MCF 10A (cell line): ENCODE measurements at regions of chr1 and their contacts with region 1.

Region 1: GRCh38 chr1:228837817-228838716 is 102.8 kb downstream of the RHOU start:
- DNase-seq: peak; percentile 100
- H3K4me3 Mint-ChIP-seq: peak overlapping the region; percentile 4
- H3K27ac Mint-ChIP-seq: peak overlapping the region; percentile 78
- H3K4me1 Mint-ChIP-seq: peaks cover 50% of the 10 kb centered on the region
- H3K27me3 Mint-ChIP-seq: peaks cover 42% of the 10 kb centered on the region
- CTCF ChIP-seq: no peak

Region 2: GRCh38 chr1:228802386-228803220 is 35.5 kb before region 1 on chr1:
- CTCF ChIA-PET with region 1: interaction called, 5 read pairs
- POLR2A ChIA-PET with region 1: interaction called, 17 read pairs
- intact Hi-C with region 1: no loop called
- DNase-seq: peak; percentile 33
- H3K4me3 Mint-ChIP-seq: no peak overlapping the region
- H3K27ac Mint-ChIP-seq: no peak overlapping the region
- H3K4me1 Mint-ChIP-seq: peaks cover 23% of the 10 kb centered on the region
- H3K27me3 Mint-ChIP-seq: peaks cover 18% of the 10 kb centered on the region
- CTCF ChIP-seq: no peak

Region 3: GRCh38 chr1:228825840-228826484 is 12.1 kb before region 1 on chr1:
- CTCF ChIA-PET with region 1: interaction called, 4 read pairs
- POLR2A ChIA-PET with region 1: interaction called, 21 read pairs
- intact Hi-C with region 1: no loop called
- DNase-seq: no peak
- H3K4me3 Mint-ChIP-seq: no peak overlapping the region
- H3K27ac Mint-ChIP-seq: no peak overlapping the region
- H3K4me1 Mint-ChIP-seq: peaks cover 3% of the 10 kb centered on the region
- H3K27me3 Mint-ChIP-seq: peaks cover 18% of the 10 kb centered on the region
- CTCF ChIP-seq: no peak

Region 4: DNA sequence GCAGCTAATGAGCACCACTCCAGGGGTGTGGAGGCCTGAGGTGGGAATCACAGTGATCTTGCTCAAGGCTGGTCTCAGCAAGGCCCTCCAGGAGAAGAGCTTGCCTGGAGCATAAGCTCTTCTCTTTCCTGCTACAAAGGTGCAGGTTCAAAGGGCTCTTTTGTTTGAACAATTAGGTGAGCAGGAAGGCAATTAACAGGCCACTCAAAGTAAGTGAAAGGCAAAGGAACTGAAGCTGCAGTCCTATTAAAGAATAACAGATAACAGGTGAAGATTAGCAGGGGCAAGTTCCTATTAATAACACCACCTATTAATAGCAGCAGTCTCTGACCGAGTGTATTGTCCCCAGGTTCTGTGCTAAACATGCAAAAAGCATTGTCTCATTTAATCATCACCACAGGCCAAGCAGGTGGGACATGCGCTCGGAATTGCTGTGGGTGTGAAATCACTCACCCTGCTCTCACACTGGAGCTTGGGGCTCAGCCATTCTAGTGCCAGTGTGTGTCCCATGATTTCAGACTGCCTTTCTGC is 11.0 kb after region 1 on chr1:
- CTCF ChIA-PET with region 1: interaction called, 10 read pairs
- POLR2A ChIA-PET with region 1: interaction called, 27 read pairs
- intact Hi-C with region 1: no loop called
- DNase-seq: no peak
- H3K4me3 Mint-ChIP-seq: no peak overlapping the region
- H3K27ac Mint-ChIP-seq: no peak overlapping the region
- H3K4me1 Mint-ChIP-seq: no peaks in the 10 kb centered on the region
- H3K27me3 Mint-ChIP-seq: no peaks in the 10 kb centered on the region
- CTCF ChIP-seq: no peak

Region 5: DNA sequence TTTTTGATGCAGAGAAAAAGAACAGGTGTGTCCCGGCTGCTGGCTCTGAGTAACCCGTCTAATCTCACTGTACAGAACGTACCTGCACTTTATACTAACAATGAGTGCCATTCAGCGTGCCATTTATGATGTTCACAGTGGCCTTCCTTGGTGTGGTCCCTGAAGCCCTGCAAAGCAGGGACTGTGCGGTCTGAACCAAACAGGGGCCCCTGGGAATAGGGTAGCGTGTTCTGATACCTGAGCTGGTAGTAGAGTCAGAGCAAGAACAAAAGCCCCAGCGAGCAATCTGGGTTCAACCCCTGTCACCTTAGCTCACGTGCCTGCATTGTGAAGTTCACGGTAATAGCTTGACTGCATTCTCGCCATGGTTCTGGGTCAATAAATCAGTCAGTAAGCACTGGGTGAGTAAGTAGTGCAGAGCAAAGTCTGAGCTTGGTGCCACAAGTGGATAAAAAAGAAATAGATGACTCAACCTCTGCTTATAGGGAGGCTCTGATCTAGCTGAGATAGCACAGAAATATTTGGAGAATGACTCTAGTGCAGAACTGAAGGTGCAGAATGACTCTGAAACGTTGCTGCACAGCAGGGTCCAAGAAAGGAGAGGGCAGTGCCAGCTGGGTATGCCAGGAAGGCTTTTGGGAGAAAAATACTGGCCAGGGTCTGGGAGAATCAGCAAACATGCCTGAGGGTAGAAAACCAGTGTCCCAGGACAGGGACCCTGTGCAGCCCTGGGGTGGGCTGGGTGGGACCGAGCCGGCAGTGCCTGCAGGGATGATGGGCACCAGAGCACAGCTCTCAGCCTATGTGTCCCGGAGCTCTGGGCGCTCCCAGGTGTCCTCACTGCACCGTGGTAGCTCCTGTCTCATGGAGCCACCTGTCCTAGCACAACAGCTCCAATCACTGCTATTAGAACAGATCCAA is 23.1 kb after region 1 on chr1:
- CTCF ChIA-PET with region 1: interaction called, 6 read pairs
- POLR2A ChIA-PET with region 1: interaction called, 39 read pairs
- intact Hi-C with region 1: no loop called
- DNase-seq: peak; percentile 88
- H3K4me3 Mint-ChIP-seq: peak overlapping the region; percentile 1
- H3K27ac Mint-ChIP-seq: peak overlapping the region; percentile 2
- H3K4me1 Mint-ChIP-seq: peaks cover 32% of the 10 kb centered on the region
- H3K27me3 Mint-ChIP-seq: peaks cover 20% of the 10 kb centered on the region
- CTCF ChIP-seq: no peak

Region 6: GRCh38 chr1:228902781-228903433 is 64.8 kb after region 1 on chr1:
- CTCF ChIA-PET with region 1: interaction called, 5 read pairs
- POLR2A ChIA-PET with region 1: interaction called, 18 read pairs
- intact Hi-C with region 1: loop called (anchors 5 kb)
- DNase-seq: peak; percentile 100
- H3K4me3 Mint-ChIP-seq: peak overlapping the region; percentile 57
- H3K27ac Mint-ChIP-seq: peak overlapping the region; percentile 89
- H3K4me1 Mint-ChIP-seq: peaks cover 30% of the 10 kb centered on the region
- H3K27me3 Mint-ChIP-seq: peaks cover 75% of the 10 kb centered on the region
- CTCF ChIP-seq: no peak

Region 7: GRCh38 chr1:229000187-229000586 is 162.1 kb after region 1 on chr1:
- CTCF ChIA-PET with region 1: no interaction called
- POLR2A ChIA-PET with region 1: no interaction called
- intact Hi-C with region 1: no loop called
- DNase-seq: no peak
- H3K4me3 Mint-ChIP-seq: no peak overlapping the region
- H3K27ac Mint-ChIP-seq: no peak overlapping the region
- H3K4me1 Mint-ChIP-seq: peaks cover 9% of the 10 kb centered on the region
- H3K27me3 Mint-ChIP-seq: no peaks in the 10 kb centered on the region
- CTCF ChIP-seq: no peak